ENCODE measurements at regions of chr5 and their contacts with region 1.

Region 1: DNA sequence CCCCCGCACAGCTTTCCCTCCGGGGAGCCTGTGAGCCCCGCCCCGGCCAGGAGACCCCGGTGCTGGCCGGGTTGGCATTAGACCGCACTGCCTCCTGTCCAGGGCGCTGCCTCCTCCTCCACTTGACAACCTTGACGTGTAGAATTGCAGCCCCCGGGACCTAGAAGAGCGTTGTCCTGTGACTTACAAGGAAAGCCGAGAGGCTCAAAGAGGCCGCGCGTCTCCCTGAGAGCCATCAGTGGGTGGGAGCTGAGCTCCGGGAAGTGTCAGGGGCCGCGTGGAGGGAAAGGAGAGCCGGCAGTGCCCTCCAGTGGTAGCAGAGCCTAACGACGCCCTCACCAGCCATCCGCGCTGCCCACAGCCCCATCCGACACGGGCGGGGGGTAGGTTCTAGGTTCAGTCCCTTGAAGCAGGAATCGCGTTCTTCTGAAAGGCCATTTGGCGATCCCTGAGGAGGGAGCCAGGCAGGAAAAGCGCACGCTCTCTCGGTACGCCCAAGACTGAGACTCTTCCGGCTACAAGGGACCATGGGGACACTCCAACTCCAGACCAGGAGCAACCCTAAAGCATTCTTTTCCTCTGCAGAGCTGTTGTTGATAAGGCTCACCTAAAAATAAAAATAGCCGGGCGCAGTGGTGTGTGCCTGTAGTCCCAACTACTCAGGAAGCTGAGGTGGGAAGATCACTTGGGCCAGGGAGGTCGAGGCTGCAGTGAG is 40.6 kb upstream of the SAP30L start:
- DNase-seq: peak; percentile 91
- CTCF ChIP-seq: peak; percentile 87

Region 2: GRCh38 chr5:154065971-154066370 is 339.3 kb before region 1 on chr5:
- CTCF ChIA-PET with region 1: interaction called, 32 read pairs
- POLR2A ChIA-PET with region 1: no interaction called
- DNase-seq: no peak
- CTCF ChIP-seq: no peak

Region 3: DNA sequence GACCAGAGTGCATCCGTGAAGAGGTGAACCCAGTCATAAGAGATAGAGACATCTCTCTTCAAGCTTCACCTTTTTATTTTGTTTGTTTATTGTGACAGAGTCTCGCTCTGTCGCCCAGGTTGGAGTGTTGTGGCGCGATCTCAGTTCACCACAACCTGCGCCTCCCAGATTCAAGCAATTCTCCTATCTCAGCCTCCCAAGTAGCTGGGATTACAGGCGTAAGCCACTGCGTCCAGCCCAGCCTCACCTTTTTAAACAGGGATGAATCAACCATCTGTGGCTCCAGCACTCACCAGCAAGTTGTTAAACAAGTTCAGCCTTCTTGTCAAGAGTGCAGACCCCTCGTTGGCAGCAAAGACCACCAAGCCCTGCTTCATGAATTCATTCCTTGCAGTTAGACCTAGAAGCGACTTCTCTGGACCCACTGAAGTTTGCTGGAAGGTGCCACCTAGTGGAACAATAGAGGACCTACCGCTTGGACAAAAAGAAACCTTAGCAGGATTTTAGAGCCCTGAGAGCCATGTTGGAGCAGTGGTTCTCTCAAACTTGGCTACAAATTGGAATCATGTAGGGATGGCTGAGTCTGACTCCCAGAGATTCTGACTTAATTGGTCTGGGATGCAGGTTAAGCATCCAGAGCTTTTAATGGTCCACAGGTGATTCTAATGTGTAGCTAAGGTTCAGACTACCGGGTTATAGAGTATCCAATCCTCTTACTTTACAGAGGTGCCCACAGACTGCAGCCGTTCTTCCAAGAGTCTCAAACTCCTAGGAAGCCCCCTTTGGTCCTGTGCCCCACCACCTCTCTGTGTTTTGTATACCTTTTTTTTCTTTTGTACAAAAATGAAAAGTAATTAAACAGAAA is 225.2 kb before region 1 on chr5:
- CTCF ChIA-PET with region 1: interaction called, 18 read pairs
- POLR2A ChIA-PET with region 1: no interaction called
- DNase-seq: peak; percentile 73
- CTCF ChIP-seq: peak; percentile 72

Region 4: DNA sequence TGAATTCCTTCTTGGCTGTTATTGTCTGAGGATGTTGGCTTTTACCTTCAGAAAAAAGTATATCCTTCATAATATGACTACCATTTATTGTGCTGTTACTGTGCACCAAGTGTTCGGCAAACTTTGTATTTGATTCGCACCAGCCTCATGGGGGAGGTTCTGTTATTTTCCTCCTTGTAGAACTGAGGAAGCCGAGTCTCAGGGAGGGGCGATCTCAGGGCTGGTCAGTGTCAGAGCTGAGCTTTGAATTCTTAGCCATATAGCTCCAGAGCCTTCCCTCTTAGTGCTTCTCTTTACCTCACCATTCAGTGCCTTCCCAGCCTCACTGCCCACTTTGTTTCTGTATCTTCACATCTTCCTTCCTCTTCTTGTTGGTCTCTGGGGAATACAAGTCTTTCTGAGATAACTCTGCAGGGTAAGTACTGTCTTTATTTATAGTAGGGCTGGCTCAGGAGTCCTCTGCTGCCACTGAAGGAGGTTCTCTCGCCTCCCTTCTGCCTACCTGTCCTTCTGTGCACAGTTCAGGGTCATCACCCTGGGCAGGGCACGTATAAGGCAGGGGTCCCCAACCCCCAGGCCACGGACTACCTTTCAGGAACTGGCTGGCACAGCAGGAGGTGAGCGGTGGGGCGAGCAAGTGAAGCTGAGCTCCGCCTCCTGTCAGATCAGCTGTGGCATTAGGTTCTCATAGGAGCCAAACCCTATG is 166.3 kb before region 1 on chr5:
- CTCF ChIA-PET with region 1: interaction called, 26 read pairs
- POLR2A ChIA-PET with region 1: no interaction called
- DNase-seq: peak; percentile 49
- CTCF ChIP-seq: no peak

Region 5: DNA sequence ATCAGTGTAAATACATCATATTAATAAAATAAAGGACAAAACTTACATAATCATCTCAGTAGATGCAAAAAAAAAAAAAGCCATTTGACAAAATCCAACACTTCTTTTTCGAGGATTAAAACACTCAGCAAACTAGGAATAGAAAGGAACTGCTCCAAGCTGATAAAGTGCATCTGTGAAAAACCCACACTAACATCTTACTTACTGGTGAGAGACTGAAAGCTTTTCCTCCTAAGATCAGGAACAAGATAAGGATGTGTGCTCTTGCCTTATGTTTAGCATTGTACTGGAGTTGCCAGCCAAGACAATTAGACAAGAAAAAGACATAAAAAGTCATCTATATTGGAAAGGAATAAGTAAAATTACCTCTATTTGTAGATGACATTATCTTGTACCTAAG is 79.7 kb before region 1 on chr5:
- CTCF ChIA-PET with region 1: interaction called, 18 read pairs
- POLR2A ChIA-PET with region 1: no interaction called
- DNase-seq: no peak
- CTCF ChIP-seq: no peak

Region 6: GRCh38 chr5:154384480-154385235 is 20.6 kb before region 1 on chr5:
- CTCF ChIA-PET with region 1: interaction called, 43 read pairs
- POLR2A ChIA-PET with region 1: no interaction called
- DNase-seq: peak; percentile 84
- CTCF ChIP-seq: no peak

Region 7: DNA sequence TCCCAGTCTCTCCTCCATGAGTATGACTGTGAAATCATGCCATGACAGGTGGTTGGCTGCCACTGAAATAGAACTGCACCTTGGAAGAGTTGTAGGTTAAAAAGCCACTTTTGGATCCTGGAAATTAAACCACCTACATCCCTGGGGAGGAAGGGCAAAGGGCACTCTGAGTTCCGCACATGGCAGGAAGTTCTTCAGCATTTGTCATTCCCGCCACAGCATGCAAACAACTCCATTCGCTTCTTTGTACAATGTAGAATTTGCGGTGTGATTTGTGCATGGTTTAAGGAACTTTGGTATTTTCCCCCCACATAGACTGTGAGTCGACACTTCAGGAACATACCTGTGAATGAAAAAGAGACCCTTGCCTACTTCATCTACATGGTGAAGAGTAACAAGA is 50.4 kb after region 1 on chr5:
- CTCF ChIA-PET with region 1: no interaction called
- POLR2A ChIA-PET with region 1: no interaction called
- DNase-seq: no peak
- CTCF ChIP-seq: no peak